ENCODE measurements at regions of chr21 and their contacts with region 1.

Region 1: GRCh38 chr21:33947451-33948095 is 32.0 kb upstream of the ATP5PO start:
- DNase-seq: peak; percentile 91
- ATAC-seq: peak; percentile 68
- H3K4me3 Mint-ChIP-seq: peak overlapping the region; percentile 63
- H3K27ac Mint-ChIP-seq: peak overlapping the region; percentile 98
- H3K4me1 Mint-ChIP-seq: peaks cover 75% of the 10 kb centered on the region
- H3K27me3 Mint-ChIP-seq: no peaks in the 10 kb centered on the region

Region 2: DNA sequence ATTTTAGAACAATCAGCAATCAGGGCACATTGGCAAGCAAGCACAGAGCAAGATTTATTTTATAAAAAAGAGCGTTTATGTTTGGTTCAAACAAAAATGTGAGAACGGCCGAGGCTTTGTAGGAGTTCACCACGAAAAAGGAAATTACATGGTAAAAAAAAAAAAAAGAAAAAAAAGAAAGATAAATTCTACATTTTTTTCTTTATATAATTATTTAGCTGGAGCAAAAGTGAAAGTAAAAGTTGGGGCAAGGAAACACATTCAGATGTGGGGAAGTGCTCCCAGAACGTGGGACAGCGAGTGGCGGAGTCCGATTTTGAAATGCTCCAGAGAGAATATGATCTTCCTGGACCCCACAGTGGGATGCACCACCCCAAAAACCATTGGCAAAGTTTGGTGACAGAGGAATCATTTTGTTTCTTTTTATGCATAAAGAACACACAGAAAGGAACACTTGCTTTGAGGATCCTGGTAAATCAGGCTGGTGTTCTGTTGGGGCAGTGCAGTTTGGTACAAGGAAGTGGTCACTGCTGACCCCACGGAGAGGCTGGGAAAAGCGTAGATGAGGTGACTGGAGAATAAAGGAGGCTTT is 15.7 kb before region 1 on chr21:
- CTCF ChIA-PET with region 1: interaction called, 27 read pairs
- POLR2A ChIA-PET with region 1: interaction called, 224 read pairs
- DNase-seq: no peak
- ATAC-seq: peak; percentile 44
- H3K4me3 Mint-ChIP-seq: peak overlapping the region; percentile 92
- H3K27ac Mint-ChIP-seq: peak overlapping the region; percentile 98
- H3K4me1 Mint-ChIP-seq: peaks cover 43% of the 10 kb centered on the region
- H3K27me3 Mint-ChIP-seq: no peaks in the 10 kb centered on the region

Region 3: GRCh38 chr21:33968080-33968994 is 20.8 kb after region 1 on chr21:
- CTCF ChIA-PET with region 1: interaction called, 6 read pairs
- POLR2A ChIA-PET with region 1: interaction called, 30 read pairs
- DNase-seq: peak; percentile 34
- ATAC-seq: no peak
- H3K4me3 Mint-ChIP-seq: no peak overlapping the region
- H3K27ac Mint-ChIP-seq: peak overlapping the region; percentile 19
- H3K4me1 Mint-ChIP-seq: peaks cover 15% of the 10 kb centered on the region
- H3K27me3 Mint-ChIP-seq: no peaks in the 10 kb centered on the region

Region 4: GRCh38 chr21:34073032-34073869 is 125.7 kb after region 1 on chr21 and contains the starts of genes MRPS6 and SLC5A3:
- CTCF ChIA-PET with region 1: interaction called, 28 read pairs
- POLR2A ChIA-PET with region 1: interaction called, 42 read pairs
- DNase-seq: peak; percentile 75
- ATAC-seq: peak; percentile 72
- H3K4me3 Mint-ChIP-seq: peak within 1 kb of the TSS; percentile 92
- H3K27ac Mint-ChIP-seq: peak within 1 kb of the TSS; percentile 75
- H3K4me1 Mint-ChIP-seq: peaks cover 45% of the 10 kb centered on the region
- H3K27me3 Mint-ChIP-seq: peaks cover 4% of the 10 kb centered on the region
- total RNA-seq, gene MRPS6: 80.2 to 84.3 TPM
- total RNA-seq, gene SLC5A3: 22.4 to 24.2 TPM

Region 5: GRCh38 chr21:34187935-34188334 is 240.4 kb after region 1 on chr21:
- CTCF ChIA-PET with region 1: no interaction called
- POLR2A ChIA-PET with region 1: no interaction called
- DNase-seq: no peak
- ATAC-seq: no peak
- H3K4me3 Mint-ChIP-seq: no peak overlapping the region
- H3K27ac Mint-ChIP-seq: no peak overlapping the region
- H3K4me1 Mint-ChIP-seq: peaks cover 35% of the 10 kb centered on the region
- H3K27me3 Mint-ChIP-seq: no peaks in the 10 kb centered on the region

Region 6: DNA sequence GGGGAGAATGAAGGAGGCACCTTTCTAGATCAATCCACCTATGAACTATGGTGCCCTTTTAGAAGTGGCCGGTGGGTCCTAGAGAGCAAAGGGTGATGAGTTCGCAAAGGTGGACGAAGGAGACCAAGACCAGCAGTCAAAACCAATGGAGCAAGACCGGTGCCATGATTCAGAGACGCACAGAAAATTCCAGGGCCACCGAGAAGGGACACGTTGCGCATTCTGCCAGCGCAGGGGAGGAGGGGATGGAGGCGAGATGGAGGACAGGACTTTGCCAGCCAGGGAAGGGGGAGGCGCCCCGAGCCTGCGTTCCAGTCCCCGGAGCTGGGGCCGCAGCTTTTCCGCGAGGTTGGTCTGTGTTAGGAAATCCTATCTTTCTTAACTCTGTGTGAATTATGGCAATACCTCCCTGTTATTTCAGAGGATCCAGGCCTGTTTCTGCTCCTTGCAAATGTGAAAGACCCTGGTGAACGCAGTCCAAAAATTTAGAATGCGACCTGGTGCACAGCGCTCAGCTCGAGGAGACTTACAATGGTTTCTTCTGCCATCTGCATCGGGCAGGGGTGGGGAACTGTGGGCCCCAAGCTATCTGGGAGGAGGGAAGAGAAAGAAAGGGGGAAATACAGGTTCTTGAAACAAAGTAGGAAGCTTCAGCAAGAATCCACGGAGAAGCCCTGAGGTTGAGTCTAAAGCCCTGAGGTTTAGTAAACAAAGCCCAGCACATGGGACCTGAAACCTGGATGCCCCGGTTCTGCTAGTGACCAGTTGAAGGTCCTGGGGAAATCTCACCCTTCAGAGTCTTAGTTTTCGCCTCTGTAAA is 255.2 kb after region 1 on chr21:
- CTCF ChIA-PET with region 1: no interaction called
- POLR2A ChIA-PET with region 1: interaction called, 12 read pairs
- DNase-seq: no peak
- ATAC-seq: no peak
- H3K4me3 Mint-ChIP-seq: peak overlapping the region; percentile 73
- H3K27ac Mint-ChIP-seq: no peak overlapping the region
- H3K4me1 Mint-ChIP-seq: peaks cover 60% of the 10 kb centered on the region
- H3K27me3 Mint-ChIP-seq: no peaks in the 10 kb centered on the region